ENCODE measurements at regions of chr11 and their contacts with region 1.

Region 1: DNA sequence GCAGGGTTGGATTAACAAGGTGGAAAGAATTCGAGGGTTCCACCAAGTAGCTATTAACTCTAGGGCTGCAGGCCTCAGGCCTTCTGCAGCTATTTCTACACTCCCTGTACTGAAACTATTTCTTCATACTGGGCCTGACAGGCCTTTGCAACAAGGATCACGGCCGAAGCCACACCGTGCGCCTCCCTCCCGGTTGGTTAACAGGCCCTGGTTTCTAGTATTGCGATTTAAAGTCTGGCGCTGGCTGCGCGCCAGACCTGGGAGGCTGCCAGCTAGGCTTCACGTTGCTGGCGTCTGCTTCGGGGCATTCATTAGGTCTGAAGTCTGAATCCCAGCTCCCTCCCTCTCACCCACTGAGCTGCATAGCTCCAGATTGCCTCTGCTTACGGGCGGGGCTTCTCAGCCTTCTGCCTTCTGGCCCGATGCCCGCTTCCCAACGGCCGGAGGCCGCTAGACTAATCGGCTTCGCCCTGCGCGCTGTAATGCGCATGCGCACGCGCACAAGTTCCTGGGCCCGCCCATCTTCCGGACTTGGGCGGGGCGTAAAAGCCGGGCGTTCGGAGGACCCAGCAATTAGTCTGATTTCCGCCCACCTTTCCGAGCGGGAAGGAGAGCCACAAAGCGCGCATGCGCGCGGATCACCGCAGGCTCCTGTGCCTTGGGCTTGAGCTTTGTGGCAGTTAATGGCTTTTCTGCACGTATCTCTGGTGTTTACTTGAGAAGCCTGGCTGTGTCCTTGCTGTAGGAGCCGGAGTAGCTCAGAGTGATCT is 1.6 kb downstream of the LDHA start:
- DNase-seq: peak; percentile 97 to 99
- ATAC-seq: peak; percentile 90 to 96 (median 94)
- H3K4me3 ChIP-seq: peak overlapping the region; percentile 64 to 99 (median 91)
- H3K27ac ChIP-seq: peak overlapping the region; percentile 88 to 100 (median 98)
- H3K4me1 ChIP-seq: peaks cover 4 to 52% (median 14%) of the 10 kb centered on the region in 9 donors
- H3K27me3 ChIP-seq: no peaks in the 10 kb centered on the region
- CTCF ChIP-seq: no peak

Region 2: GRCh38 chr11:17991783-17992433 is 404.0 kb before region 1 on chr11:
- intact Hi-C with region 1: loop called in 1 of 10 experiments (anchors 5 kb)
- DNase-seq: peak in 1 of 2 donors; percentile 27
- ATAC-seq: peak in 3 of 8 donors; percentile 38 to 52 (median 49)
- H3K4me3 ChIP-seq: no peak overlapping the region
- H3K27ac ChIP-seq: no peak overlapping the region
- H3K4me1 ChIP-seq: no peaks in the 10 kb centered on the region
- H3K27me3 ChIP-seq: no peaks in the 10 kb centered on the region
- CTCF ChIP-seq: peak; percentile 53 to 82 (median 76)

Region 3: GRCh38 chr11:18294862-18295261 is 101.1 kb before region 1 on chr11:
- intact Hi-C with region 1: no loop called
- DNase-seq: no peak
- ATAC-seq: no peak
- H3K4me3 ChIP-seq: no peak overlapping the region
- H3K27ac ChIP-seq: no peak overlapping the region
- H3K4me1 ChIP-seq: no peaks in the 10 kb centered on the region
- H3K27me3 ChIP-seq: no peaks in the 10 kb centered on the region
- CTCF ChIP-seq: no peak

Region 4: DNA sequence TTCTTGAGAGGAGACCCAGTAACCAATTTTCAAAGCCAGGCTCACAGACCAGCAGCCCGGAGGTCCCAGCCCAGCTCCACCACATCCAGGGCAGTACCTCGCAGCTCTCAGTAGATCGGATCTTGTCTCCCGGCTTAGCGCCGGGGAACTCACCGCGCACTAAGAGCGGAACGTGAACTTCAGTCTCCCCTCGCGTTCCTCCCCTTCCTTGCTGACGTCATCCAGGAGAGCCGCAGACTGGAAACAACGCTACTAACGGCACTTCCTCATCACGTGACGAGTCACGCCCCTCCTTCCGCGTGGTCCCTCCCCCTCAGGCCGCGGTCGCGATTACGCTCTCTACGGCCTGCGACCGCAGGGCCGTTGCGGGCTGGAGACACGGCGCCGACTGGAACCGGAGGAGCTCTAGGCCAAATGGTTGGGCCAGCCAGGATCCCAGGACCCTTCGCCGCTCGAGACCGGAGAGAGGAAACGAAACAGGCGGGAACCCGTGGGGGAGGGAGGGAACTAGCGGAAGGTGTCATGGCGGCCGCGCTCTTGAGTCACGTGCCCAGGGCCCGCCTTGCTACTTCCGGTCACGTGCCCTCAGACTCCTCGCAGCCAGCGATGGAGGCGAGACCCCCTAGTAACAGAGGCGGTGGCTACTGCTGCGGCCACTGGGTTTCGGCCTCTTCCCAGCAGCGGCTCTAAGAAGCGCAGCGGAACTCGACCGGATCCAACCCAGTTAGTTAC is 73.8 kb before region 1 on chr11 and contains the starts of genes GTF2H1 and HPS5:
- intact Hi-C with region 1: loop called in 8 of 10 experiments (anchors 1 to 10 kb)
- DNase-seq: peak; percentile 92 to 97
- ATAC-seq: peak; percentile 98 to 100 (median 99)
- H3K4me3 ChIP-seq: peak within 1 kb of the TSS; percentile 70 to 93 (median 84)
- H3K27ac ChIP-seq: peak within 1 kb of the TSS; percentile 93 to 99 (median 96)
- H3K4me1 ChIP-seq: peaks cover 0 to 59% (median 45%) of the 10 kb centered on the region in 9 donors
- H3K27me3 ChIP-seq: no peaks in the 10 kb centered on the region
- CTCF ChIP-seq: no peak
- total RNA-seq, gene GTF2H1: 19.6 to 27.9 (median 25.2) TPM
- total RNA-seq, gene HPS5: 9.9 to 14.9 (median 12.5) TPM

Region 5: GRCh38 chr11:18383388-18384156 is 12.3 kb before region 1 on chr11:
- intact Hi-C with region 1: loop called in 3 of 10 experiments (anchors 1 kb)
- DNase-seq: peak; percentile 56 to 74
- ATAC-seq: peak; percentile 87 to 96 (median 90)
- H3K4me3 ChIP-seq: peak overlapping the region in 1 of 10 donors; percentile 4
- H3K27ac ChIP-seq: peak overlapping the region; percentile 89 to 98 (median 94)
- H3K4me1 ChIP-seq: peaks cover 13 to 32% (median 26%) of the 10 kb centered on the region in 9 donors
- H3K27me3 ChIP-seq: no peaks in the 10 kb centered on the region
- CTCF ChIP-seq: no peak

Region 6: GRCh38 chr11:18721561-18722292 is 325.8 kb after region 1 on chr11:
- intact Hi-C with region 1: loop called in 1 of 10 experiments (anchors 5 kb)
- DNase-seq: peak; percentile 26 to 40
- ATAC-seq: peak; percentile 54 to 83 (median 70)
- H3K4me3 ChIP-seq: peak overlapping the region; percentile 33 to 72 (median 61)
- H3K27ac ChIP-seq: peak overlapping the region in 9 of 10 donors; percentile 33 to 63 (median 47)
- H3K4me1 ChIP-seq: peaks cover 0 to 18% (median 10%) of the 10 kb centered on the region in 9 donors
- H3K27me3 ChIP-seq: no peaks in the 10 kb centered on the region
- CTCF ChIP-seq: peak; percentile 61 to 87 (median 71)

Measured in heart right ventricle (tissue), 16 donors.